ENCODE measurements at regions of chr19 and their contacts with region 1.

Region 1: GRCh38 chr19:55258828-55259539 is at the start of gene PPP6R1:
- DNase-seq: peak; percentile 98
- ATAC-seq: peak; percentile 69
- H3K4me3 Mint-ChIP-seq: peak within 1 kb of the TSS; percentile 95
- H3K27ac Mint-ChIP-seq: peak within 1 kb of the TSS; percentile 98
- H3K4me1 Mint-ChIP-seq: peaks cover 22% of the 10 kb centered on the region
- H3K27me3 Mint-ChIP-seq: no peaks in the 10 kb centered on the region
- total RNA-seq, gene PPP6R1: 177 to 201 TPM

Region 2: GRCh38 chr19:54137086-54137921 is 1121.7 kb before region 1 on chr19 and contains the start of gene CNOT3:
- CTCF ChIA-PET with region 1: no interaction called
- POLR2A ChIA-PET with region 1: no interaction called
- intact Hi-C with region 1: loop called in 1 of 2 experiments (anchors 1 kb)
- DNase-seq: peak; percentile 99
- ATAC-seq: peak; percentile 86
- H3K4me3 Mint-ChIP-seq: peak within 1 kb of the TSS; percentile 83
- H3K27ac Mint-ChIP-seq: peak within 1 kb of the TSS; percentile 91
- H3K4me1 Mint-ChIP-seq: peaks cover 44% of the 10 kb centered on the region
- H3K27me3 Mint-ChIP-seq: no peaks in the 10 kb centered on the region
- total RNA-seq, gene CNOT3: 61.0 to 93.8 TPM

Region 3: DNA sequence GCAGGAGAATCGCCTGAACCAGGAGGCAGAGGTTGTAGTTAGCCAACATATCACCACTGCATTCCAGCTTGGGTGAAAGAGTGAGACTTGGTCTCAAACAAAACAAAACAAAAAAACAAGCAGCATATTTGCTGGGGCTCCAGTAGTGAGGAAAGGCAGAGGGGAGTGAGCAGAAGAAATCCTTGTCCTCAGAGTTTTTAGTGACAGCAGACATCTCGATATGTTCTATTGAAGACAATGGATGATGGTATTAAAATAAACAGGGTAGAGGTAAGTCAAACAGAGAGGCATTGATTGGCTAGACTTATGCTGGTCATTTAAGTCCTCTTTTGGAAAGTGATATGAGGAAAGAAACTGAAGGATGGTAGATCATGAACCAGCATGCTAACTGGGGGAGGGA is 330.7 kb before region 1 on chr19:
- CTCF ChIA-PET with region 1: no interaction called
- POLR2A ChIA-PET with region 1: no interaction called
- intact Hi-C with region 1: no loop called
- DNase-seq: no peak
- ATAC-seq: no peak
- H3K4me3 Mint-ChIP-seq: no peak overlapping the region
- H3K27ac Mint-ChIP-seq: no peak overlapping the region
- H3K4me1 Mint-ChIP-seq: no peaks in the 10 kb centered on the region
- H3K27me3 Mint-ChIP-seq: no peaks in the 10 kb centered on the region

Region 4: GRCh38 chr19:54952591-54953344 is 306.2 kb before region 1 on chr19:
- CTCF ChIA-PET with region 1: no interaction called
- POLR2A ChIA-PET with region 1: no interaction called
- intact Hi-C with region 1: no loop called
- DNase-seq: no peak
- ATAC-seq: no peak
- H3K4me3 Mint-ChIP-seq: no peak overlapping the region
- H3K27ac Mint-ChIP-seq: no peak overlapping the region
- H3K4me1 Mint-ChIP-seq: no peaks in the 10 kb centered on the region
- H3K27me3 Mint-ChIP-seq: peaks cover 2% of the 10 kb centered on the region

Region 5: GRCh38 chr19:55062734-55063492 is 196.1 kb before region 1 on chr19 and contains the start of gene RDH13:
- CTCF ChIA-PET with region 1: no interaction called
- POLR2A ChIA-PET with region 1: no interaction called
- intact Hi-C with region 1: loop called in 1 of 2 experiments (anchors 1 kb)
- DNase-seq: peak; percentile 100
- ATAC-seq: peak; percentile 100
- H3K4me3 Mint-ChIP-seq: peak within 1 kb of the TSS; percentile 79
- H3K27ac Mint-ChIP-seq: peak within 1 kb of the TSS; percentile 61
- H3K4me1 Mint-ChIP-seq: peaks cover 9% of the 10 kb centered on the region
- H3K27me3 Mint-ChIP-seq: peaks cover 23% of the 10 kb centered on the region
- total RNA-seq, gene RDH13: 11.9 to 12.8 TPM

Region 6: DNA sequence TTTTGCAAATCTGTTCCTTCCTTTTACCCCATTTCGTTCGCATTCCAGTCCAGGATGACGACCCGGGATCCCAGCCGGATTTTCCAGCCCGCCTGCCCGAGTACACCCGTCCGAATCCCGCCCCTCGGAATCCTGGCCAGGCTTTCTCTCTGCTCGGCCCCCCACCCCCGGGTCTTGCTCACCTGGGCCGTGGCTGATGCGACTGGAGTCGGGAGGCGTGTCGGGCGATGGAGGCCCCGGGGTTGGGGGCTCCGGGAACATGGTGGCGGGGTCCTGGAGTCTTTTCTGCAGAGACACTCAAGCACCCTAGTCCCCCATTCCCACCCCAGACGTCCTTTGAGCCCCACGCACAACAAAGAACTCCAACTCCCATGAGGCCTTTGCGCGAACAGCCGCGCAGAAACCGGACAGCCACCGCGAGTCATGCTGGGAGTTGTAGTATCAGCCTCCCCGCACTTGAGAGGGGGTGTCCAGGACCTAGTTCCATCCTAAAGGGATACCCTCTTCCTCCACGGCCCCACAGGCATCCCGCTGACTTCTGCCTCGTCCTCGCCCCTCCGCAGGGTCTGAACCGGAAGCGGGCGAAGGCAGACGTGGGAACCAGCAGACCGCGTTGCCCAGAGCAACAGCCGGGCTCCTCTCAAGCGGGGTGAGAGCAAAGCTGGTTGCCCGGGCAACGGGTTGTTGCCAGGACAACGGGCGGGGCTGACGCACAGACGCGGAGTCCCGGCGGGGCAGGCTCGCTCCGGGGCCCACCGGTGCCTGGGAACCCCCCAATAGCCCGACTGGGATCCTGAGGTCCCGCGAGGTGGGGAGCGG is 80.0 kb before region 1 on chr19:
- CTCF ChIA-PET with region 1: no interaction called
- POLR2A ChIA-PET with region 1: no interaction called
- intact Hi-C with region 1: loop called in 1 of 2 experiments (anchors 1 kb)
- DNase-seq: peak; percentile 95
- ATAC-seq: peak; percentile 81
- H3K4me3 Mint-ChIP-seq: peak overlapping the region; percentile 61
- H3K27ac Mint-ChIP-seq: no peak overlapping the region
- H3K4me1 Mint-ChIP-seq: peaks cover 20% of the 10 kb centered on the region
- H3K27me3 Mint-ChIP-seq: peaks cover 49% of the 10 kb centered on the region

Region 7: DNA sequence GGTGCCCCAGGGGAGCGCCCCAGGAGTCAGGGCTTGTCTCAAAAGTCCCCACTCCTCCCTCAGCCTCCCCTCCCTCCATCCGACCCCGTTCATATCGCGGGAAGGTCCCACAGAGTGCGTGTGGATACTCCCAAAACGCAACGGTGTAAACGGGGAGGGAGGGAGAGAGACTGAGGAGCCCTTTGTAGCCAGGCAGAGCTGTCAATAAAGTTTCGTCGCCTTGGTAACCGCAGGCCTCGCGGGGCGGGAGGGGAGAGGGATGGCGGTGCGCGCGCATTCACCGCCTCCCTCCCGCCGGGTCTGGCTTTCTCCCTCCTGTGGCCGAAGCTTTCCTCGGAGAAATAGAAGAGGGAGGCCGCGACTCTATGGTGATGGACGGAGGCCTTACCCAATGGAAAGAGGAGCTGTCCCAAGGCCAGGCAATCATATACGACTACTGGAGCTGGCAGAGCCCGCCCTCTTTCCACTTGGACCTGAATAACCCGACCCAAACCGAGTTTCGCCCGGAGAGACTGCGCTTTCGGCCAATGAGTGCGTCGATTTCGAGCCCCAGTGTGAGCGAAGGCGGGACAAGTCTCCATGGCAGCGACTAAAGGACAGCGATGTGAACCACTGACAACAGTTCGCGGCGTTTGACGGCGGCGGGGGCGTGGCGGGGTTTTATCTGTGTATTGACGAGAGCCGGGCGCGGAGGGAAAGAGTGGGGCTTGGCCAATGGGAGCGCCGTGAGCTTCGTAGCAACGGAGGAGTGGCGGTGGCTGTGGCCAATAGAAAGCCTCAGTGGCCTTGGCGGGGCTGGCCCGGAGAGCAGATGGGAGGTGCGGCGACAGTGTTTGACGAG is 80.3 kb after region 1 on chr19 and contains the start of gene KMT5C:
- CTCF ChIA-PET with region 1: interaction called, 4 read pairs
- POLR2A ChIA-PET with region 1: interaction called, 17 read pairs
- intact Hi-C with region 1: loop called (anchors 1 to 2 kb)
- DNase-seq: peak; percentile 100
- ATAC-seq: peak; percentile 86
- H3K4me3 Mint-ChIP-seq: peak within 1 kb of the TSS; percentile 86
- H3K27ac Mint-ChIP-seq: peak within 1 kb of the TSS; percentile 97
- H3K4me1 Mint-ChIP-seq: peaks cover 18% of the 10 kb centered on the region
- H3K27me3 Mint-ChIP-seq: peaks cover 2% of the 10 kb centered on the region
- total RNA-seq, gene KMT5C: 27.5 to 32.3 TPM

Region 8: DNA sequence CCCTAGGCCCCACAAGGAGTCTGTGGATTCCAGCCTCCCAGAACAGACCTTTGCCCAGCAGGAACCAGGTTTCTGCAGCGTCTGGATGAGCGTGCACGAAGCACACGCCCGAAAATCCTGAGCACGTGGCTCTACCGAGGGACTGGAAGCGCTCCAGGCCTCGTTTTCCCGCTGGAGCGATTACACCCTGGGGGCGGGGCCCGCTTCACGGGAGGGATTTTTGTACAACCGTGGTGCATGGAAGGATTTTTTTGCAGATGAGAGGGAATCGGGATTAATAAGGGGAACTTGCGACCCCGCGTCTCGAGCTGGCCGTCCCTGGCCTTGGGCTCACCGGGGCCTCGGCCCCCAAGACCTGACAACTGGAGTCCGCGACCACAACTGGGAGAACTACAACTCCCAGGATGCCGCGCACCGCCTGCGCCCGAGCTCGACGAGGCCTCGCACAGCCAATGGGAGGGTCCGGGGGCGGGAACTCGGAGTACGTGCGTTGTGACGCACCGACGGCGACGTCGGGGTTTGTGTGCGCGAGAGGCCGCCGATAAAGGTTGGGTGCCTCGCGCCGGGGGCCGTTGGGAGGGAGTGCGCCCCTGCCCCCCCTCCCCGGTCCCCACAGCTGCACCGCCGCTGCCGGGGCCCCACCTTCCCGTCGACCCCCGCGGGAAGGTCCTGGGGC is 217.3 kb after region 1 on chr19 and contains the start of gene ZNF628:
- CTCF ChIA-PET with region 1: no interaction called
- POLR2A ChIA-PET with region 1: no interaction called
- intact Hi-C with region 1: loop called in 1 of 2 experiments (anchors 1 kb)
- DNase-seq: peak; percentile 99
- ATAC-seq: peak; percentile 96
- H3K4me3 Mint-ChIP-seq: peak within 1 kb of the TSS; percentile 84
- H3K27ac Mint-ChIP-seq: peak within 1 kb of the TSS; percentile 88
- H3K4me1 Mint-ChIP-seq: peaks cover 32% of the 10 kb centered on the region
- H3K27me3 Mint-ChIP-seq: no peaks in the 10 kb centered on the region
- total RNA-seq, gene ZNF628: 5.6 to 6.8 TPM

Region 9: GRCh38 chr19:55576746-55577145 is 317.8 kb after region 1 on chr19:
- CTCF ChIA-PET with region 1: no interaction called
- POLR2A ChIA-PET with region 1: no interaction called
- intact Hi-C with region 1: no loop called
- DNase-seq: no peak
- ATAC-seq: no peak
- H3K4me3 Mint-ChIP-seq: no peak overlapping the region
- H3K27ac Mint-ChIP-seq: no peak overlapping the region
- H3K4me1 Mint-ChIP-seq: peaks cover 13% of the 10 kb centered on the region
- H3K27me3 Mint-ChIP-seq: no peaks in the 10 kb centered on the region

Region 10: DNA sequence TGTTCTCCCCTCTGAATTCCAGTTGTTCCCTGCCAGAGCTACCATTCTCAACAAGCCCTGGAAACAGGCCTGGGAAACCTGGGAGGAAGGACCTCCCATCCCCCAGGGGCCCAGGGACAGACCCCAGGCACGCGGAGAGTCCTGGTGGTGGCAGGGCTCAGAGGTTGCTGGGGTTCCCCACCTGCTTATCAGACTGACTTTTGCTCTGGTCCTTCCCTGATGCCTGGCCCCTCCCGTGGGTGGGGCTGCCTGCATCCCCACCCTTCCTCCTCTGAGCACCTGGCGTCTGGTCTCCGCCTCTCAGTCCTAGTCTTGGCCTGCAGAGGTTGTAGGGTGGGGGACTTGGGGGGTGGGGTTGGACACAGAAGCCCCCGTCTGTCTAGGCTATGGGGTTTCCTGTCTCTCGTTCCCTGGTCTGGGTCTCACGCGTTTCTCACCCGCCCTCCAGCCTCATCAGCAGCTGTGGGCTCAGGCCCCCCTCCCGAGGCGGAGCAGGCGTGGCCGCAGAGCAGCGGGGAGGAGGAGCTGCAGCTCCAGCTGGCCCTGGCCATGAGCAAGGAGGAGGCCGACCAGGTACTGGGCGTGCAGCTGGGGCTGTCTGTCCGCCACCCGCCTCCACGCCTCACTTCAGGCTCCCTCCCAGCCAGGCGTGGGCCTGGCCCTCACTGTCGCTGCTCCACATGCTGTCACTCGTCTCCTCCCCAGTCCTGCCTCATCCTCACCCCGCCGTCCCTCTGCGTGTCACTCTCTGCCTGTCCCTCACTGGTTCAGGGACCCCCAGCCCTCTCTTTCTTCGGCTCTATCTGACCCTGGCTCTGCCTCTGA is 429.6 kb after region 1 on chr19:
- CTCF ChIA-PET with region 1: no interaction called
- POLR2A ChIA-PET with region 1: no interaction called
- intact Hi-C with region 1: no loop called
- DNase-seq: no peak
- ATAC-seq: no peak
- H3K4me3 Mint-ChIP-seq: no peak overlapping the region
- H3K27ac Mint-ChIP-seq: no peak overlapping the region
- H3K4me1 Mint-ChIP-seq: peaks cover 5% of the 10 kb centered on the region
- H3K27me3 Mint-ChIP-seq: no peaks in the 10 kb centered on the region

Region 11: DNA sequence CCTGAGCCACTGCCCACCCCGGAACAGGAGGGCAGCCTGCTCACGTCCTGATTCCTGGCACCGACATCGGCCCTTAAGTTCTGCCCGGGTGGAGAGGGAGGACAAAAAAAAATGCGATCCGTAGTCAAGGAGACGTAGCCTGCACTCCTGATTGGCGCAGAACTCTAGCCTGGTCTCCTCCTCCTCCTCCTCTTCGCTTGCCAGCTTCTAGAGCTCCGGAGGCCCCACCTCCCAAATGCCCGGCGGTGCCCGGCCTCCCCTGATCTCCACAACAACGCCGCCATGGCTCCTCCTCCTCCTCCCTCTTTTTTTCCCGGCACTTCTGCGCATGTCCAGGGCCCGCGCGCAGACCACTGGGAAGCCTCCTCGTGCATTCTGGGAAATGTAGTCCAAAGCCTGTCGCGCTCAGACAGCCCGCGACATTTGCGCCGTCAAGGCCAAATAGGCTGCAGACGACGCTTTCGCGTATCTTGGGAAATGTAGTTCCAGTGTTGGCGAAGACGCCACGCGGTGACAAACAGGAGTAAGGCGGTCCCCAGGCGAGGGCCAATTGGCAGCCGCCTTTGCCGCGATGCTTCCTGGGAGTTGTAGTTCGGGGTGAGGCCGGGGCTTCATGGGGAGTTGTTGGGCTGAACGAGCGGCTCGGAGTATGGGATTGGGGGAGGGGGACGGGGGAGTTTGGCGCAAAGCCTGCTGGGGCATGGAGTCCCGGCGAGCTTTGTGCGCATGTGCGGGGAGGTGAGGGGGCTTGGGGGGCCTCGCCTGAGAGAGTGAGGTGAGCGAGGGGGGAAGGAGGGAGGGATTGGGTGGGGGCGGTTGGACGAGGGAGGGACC is 881.8 kb after region 1 on chr19 and contains the start of gene ZNF444:
- CTCF ChIA-PET with region 1: no interaction called
- POLR2A ChIA-PET with region 1: no interaction called
- intact Hi-C with region 1: loop called in 1 of 2 experiments (anchors 2 kb)
- DNase-seq: peak; percentile 99
- ATAC-seq: peak; percentile 90
- H3K4me3 Mint-ChIP-seq: peak within 1 kb of the TSS; percentile 89
- H3K27ac Mint-ChIP-seq: peak within 1 kb of the TSS; percentile 94
- H3K4me1 Mint-ChIP-seq: peaks cover 31% of the 10 kb centered on the region
- H3K27me3 Mint-ChIP-seq: no peaks in the 10 kb centered on the region
- total RNA-seq, gene ZNF444: 29.2 to 32.2 TPM

Measured in activated CD4-positive, alpha-beta T cell treated with anti-CD3 and anti-CD28 coated beads for 36 hours (primary cell).